HCT116 (cell line): ENCODE measurements at regions of chr11 and their contacts with region 1.

Region 1: GRCh38 chr11:73335204-73335923 is 27.3 kb downstream of the ARHGEF17 start:
- DNase-seq: peak; percentile 33
- ATAC-seq: peak; percentile 65
- H3K4me3 ChIP-seq: no peak overlapping the region
- H3K27ac ChIP-seq: peak overlapping the region; percentile 38; the same call in 1 of the 2 replicates
- H3K4me1 ChIP-seq: peaks cover 27 to 42% of the 10 kb centered on the region in 2 experiments
- H3K27me3 ChIP-seq: no peaks in the 10 kb centered on the region
- CTCF ChIP-seq: peak; percentile 95 to 98 (median 97)
- POLR2A ChIP-seq: no peak
- RAD21 ChIP-seq: peak; percentile 95

Region 2: GRCh38 chr11:73184953-73185671 is 150.3 kb before region 1 on chr11:
- CTCF ChIA-PET with region 1: interaction called, 4 read pairs
- POLR2A ChIA-PET with region 1: no interaction called
- RAD21 ChIA-PET with region 1: no interaction called
- intact Hi-C with region 1: loop called (anchors 2 kb)
- DNase-seq: peak; percentile 40
- ATAC-seq: peak; percentile 96
- H3K4me3 ChIP-seq: peak overlapping the region in 1 of 2 experiments; percentile 15; a peak in 1 of 4 replicates
- H3K27ac ChIP-seq: no peak overlapping the region
- H3K4me1 ChIP-seq: peaks cover 2 to 24% of the 10 kb centered on the region in 2 experiments; a peak in 3 of 4 replicates
- H3K27me3 ChIP-seq: no peaks in the 10 kb centered on the region
- CTCF ChIP-seq: peak; percentile 95 to 99 (median 96)
- POLR2A ChIP-seq: no peak
- RAD21 ChIP-seq: peak; percentile 95

Region 3: DNA sequence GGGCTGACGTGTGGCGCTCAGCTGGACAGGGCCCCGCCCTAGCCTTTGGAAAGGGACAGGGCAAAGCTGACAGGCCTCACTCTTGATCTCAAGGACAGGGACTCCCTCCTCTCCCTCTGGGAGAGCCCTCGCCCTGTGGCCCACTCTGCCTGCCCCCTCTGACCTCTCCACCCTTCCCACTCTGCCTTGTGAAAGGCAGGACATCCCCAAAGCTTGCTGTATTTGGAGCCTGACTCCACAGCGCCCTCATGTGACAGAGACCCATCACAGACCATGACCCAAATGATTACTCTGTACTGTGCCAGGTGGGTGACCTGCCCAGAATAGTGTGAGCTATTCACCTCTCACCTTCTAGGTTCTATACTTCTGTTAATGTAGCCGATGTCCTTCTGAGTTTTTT is 98.5 kb before region 1 on chr11:
- CTCF ChIA-PET with region 1: interaction called, 11 read pairs
- POLR2A ChIA-PET with region 1: no interaction called
- RAD21 ChIA-PET with region 1: no interaction called
- intact Hi-C with region 1: loop called (anchors 5 kb)
- DNase-seq: peak; percentile 39
- ATAC-seq: peak; percentile 88
- H3K4me3 ChIP-seq: no peak overlapping the region
- H3K27ac ChIP-seq: no peak overlapping the region
- H3K4me1 ChIP-seq: peaks cover 0 to 14% of the 10 kb centered on the region in 2 experiments; a peak in 1 of 4 replicates
- H3K27me3 ChIP-seq: no peaks in the 10 kb centered on the region
- CTCF ChIP-seq: peak; percentile 86 to 90 (median 86)
- POLR2A ChIP-seq: no peak
- RAD21 ChIP-seq: peak; percentile 92

Region 4: GRCh38 chr11:73242251-73243079 is 92.9 kb before region 1 on chr11:
- CTCF ChIA-PET with region 1: interaction called, 11 read pairs
- POLR2A ChIA-PET with region 1: no interaction called
- RAD21 ChIA-PET with region 1: no interaction called
- intact Hi-C with region 1: loop called (anchors 5 kb)
- DNase-seq: peak; percentile 65
- ATAC-seq: peak; percentile 93
- H3K4me3 ChIP-seq: peak overlapping the region; percentile 42 to 48
- H3K27ac ChIP-seq: no peak overlapping the region
- H3K4me1 ChIP-seq: peaks cover 0 to 26% of the 10 kb centered on the region in 2 experiments; a peak in 1 of 4 replicates
- H3K27me3 ChIP-seq: no peaks in the 10 kb centered on the region
- CTCF ChIP-seq: peak; percentile 96 to 98 (median 97)
- POLR2A ChIP-seq: no peak
- RAD21 ChIP-seq: peak; percentile 93

Region 5: GRCh38 chr11:73295231-73295995 is 40.0 kb before region 1 on chr11:
- CTCF ChIA-PET with region 1: interaction called, 13 read pairs
- POLR2A ChIA-PET with region 1: no interaction called
- RAD21 ChIA-PET with region 1: no interaction called
- intact Hi-C with region 1: loop called (anchors 1 kb)
- DNase-seq: peak; percentile 43
- ATAC-seq: peak; percentile 89
- H3K4me3 ChIP-seq: no peak overlapping the region
- H3K27ac ChIP-seq: no peak overlapping the region
- H3K4me1 ChIP-seq: peaks cover 0 to 7% of the 10 kb centered on the region in 2 experiments; a peak in 2 of 4 replicates
- H3K27me3 ChIP-seq: no peaks in the 10 kb centered on the region; the same call in 1 of the 2 replicates
- CTCF ChIP-seq: peak; percentile 82 to 99 (median 99)
- POLR2A ChIP-seq: no peak
- RAD21 ChIP-seq: peak; percentile 66

Region 6: DNA sequence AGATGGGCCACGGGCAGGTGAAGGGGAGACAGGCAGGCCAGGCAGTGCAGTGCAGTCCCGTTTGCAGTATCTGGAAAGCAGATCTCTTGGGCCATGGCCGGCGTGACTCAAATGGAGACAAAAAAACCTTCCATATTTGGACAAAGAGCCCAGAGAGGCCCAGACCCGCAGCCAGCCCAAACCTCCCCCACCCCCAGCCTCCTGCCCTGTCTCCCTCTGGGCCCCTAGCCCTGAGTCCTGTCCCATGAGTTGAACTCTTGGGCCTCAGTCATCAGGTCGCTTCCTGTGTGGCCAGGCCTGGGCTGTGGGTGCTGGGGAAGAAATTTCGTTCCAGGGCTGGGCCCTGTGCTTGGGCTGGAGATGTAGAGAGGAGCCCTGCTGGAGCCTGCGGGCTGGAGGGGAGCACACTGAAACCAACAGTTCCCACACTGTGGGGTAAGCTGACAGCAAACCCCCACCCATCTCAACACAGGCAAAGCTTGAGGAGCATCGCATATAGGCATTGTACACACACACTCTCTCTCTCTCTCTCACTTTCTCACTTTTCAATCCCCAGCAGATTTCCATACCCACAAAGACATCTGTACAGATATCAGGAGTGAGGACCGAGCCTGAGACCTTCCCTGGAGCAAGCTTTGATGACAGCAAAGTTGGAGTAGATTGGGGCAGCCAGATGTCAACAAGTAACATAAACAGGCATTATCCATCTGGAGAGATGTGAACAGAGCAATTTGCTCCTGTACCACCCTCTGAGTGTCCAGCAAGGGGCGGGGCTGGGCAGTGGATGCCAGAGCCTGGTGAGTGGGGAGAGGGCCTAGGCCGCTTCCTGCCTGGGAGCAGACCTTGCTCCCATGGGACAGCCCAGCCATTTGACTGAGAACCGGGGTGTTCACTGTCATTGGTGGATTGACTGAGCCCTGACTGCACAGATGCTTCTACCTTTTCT is 10.1 kb before region 1 on chr11:
- CTCF ChIA-PET with region 1: interaction called, 13 read pairs
- POLR2A ChIA-PET with region 1: interaction called, 4 read pairs
- RAD21 ChIA-PET with region 1: interaction called in 1 of 2 experiments, 4 read pairs
- intact Hi-C with region 1: no loop called
- DNase-seq: no peak
- ATAC-seq: no peak
- H3K4me3 ChIP-seq: no peak overlapping the region
- H3K27ac ChIP-seq: no peak overlapping the region
- H3K4me1 ChIP-seq: peaks cover 42 to 56% of the 10 kb centered on the region in 2 experiments
- H3K27me3 ChIP-seq: no peaks in the 10 kb centered on the region
- CTCF ChIP-seq: no peak
- POLR2A ChIP-seq: no peak
- RAD21 ChIP-seq: no peak

Region 7: GRCh38 chr11:73350908-73351636 is 15.7 kb after region 1 on chr11:
- CTCF ChIA-PET with region 1: interaction called, 48 read pairs
- POLR2A ChIA-PET with region 1: no interaction called
- RAD21 ChIA-PET with region 1: interaction called in 1 of 2 experiments, 3 read pairs
- intact Hi-C with region 1: no loop called
- DNase-seq: peak; percentile 41
- ATAC-seq: peak; percentile 85
- H3K4me3 ChIP-seq: no peak overlapping the region
- H3K27ac ChIP-seq: no peak overlapping the region
- H3K4me1 ChIP-seq: no peaks in the 10 kb centered on the region
- H3K27me3 ChIP-seq: no peaks in the 10 kb centered on the region
- CTCF ChIP-seq: peak; percentile 88 to 97 (median 97); a peak in 5 of 6 replicates
- POLR2A ChIP-seq: no peak
- RAD21 ChIP-seq: peak; percentile 84